Activated CD4-positive, alpha-beta memory T cell treated with anti-CD3 and anti-CD28 coated beads, Interleukin-2, amount 10 ng/mL, durations not matched to agents 7 days and 5 days (primary cell): ENCODE measurements at regions of chr2 and their contacts with region 1.

Region 1: GRCh38 chr2:143110758-143111428 is 18.3 kb upstream of the ARHGAP15 start:
- DNase-seq: peak; percentile 73
- H3K4me3 Mint-ChIP-seq: peak overlapping the region; percentile 8
- H3K27ac Mint-ChIP-seq: peak overlapping the region; percentile 77
- H3K4me1 Mint-ChIP-seq: peaks cover 27% of the 10 kb centered on the region
- H3K27me3 Mint-ChIP-seq: peaks cover 4% of the 10 kb centered on the region

Region 2: GRCh38 chr2:143034292-143035074 is 76.4 kb before region 1 on chr2:
- CTCF ChIA-PET with region 1: interaction called, 12 read pairs
- POLR2A ChIA-PET with region 1: no interaction called
- DNase-seq: peak; percentile 63
- H3K4me3 Mint-ChIP-seq: no peak overlapping the region
- H3K27ac Mint-ChIP-seq: no peak overlapping the region
- H3K4me1 Mint-ChIP-seq: peaks cover 8% of the 10 kb centered on the region
- H3K27me3 Mint-ChIP-seq: peaks cover 4% of the 10 kb centered on the region

Region 3: DNA sequence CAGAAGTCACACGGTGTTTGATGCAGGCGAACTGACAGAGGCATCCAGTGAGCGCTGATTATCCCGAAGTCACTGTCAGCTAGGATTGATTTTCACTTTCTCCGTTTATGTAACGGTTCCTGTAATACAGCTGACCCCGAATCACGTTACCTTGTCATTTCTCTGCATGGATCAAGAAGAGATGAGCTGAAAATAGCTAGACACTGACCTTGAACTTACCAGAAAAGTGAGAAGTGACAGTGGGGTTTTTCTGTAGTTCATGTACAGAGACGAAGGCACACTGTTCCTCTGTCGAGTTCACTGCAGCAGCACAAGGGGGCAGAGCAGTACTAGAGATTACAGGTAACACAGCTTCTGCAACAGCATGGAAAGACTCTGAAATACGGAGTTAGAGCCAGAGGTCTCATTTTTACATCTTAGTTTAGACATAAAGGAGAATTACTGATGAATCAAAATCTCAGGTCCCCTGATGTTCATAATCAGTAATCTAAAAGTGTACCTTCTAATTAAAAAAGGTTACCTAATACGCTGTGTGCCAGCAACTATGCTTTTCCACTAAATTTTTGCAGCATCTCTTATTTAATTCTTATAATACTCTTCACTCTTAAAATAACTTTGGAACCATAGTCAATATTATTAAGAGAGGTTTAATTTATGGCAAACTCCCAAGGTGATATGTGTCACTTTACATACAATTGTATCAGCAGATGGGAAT is 51.4 kb after region 1 on chr2:
- CTCF ChIA-PET with region 1: interaction called, 18 read pairs
- POLR2A ChIA-PET with region 1: no interaction called
- DNase-seq: peak; percentile 48
- H3K4me3 Mint-ChIP-seq: no peak overlapping the region
- H3K27ac Mint-ChIP-seq: no peak overlapping the region
- H3K4me1 Mint-ChIP-seq: peaks cover 51% of the 10 kb centered on the region
- H3K27me3 Mint-ChIP-seq: no peaks in the 10 kb centered on the region

Region 4: DNA sequence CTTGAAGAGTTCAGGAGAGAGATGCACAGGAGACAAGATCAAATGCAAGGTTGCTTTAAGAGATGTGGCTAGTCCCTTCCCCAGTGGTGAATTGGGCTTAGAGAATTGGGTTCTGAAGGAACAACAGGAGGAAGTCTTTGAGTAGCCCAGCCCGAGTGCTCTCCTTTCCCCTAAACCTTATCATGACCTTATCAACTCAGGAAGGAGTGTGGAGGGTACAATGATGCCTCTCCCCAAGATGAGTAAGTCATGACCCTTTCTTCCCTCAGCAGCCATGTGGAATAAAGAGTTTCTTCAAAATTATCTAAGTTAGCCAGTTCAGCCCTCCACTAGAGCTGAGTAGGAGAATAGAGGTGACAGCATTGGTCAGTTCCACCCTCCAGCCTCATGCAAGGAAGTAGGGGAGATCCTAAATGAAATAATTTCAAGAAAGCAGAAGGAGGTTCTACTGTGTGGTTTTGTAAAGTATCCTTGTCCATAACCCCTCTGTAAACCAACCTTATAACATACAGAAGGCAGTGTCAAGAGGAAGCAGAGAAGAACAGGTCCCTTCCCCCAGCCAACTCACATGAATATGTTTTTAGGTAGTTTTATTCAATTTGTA is 106.7 kb after region 1 on chr2:
- CTCF ChIA-PET with region 1: interaction called, 32 read pairs
- POLR2A ChIA-PET with region 1: interaction called, 5 read pairs
- DNase-seq: no peak
- H3K4me3 Mint-ChIP-seq: no peak overlapping the region
- H3K27ac Mint-ChIP-seq: peak overlapping the region; percentile 43
- H3K4me1 Mint-ChIP-seq: peaks cover 31% of the 10 kb centered on the region
- H3K27me3 Mint-ChIP-seq: no peaks in the 10 kb centered on the region

Region 5: DNA sequence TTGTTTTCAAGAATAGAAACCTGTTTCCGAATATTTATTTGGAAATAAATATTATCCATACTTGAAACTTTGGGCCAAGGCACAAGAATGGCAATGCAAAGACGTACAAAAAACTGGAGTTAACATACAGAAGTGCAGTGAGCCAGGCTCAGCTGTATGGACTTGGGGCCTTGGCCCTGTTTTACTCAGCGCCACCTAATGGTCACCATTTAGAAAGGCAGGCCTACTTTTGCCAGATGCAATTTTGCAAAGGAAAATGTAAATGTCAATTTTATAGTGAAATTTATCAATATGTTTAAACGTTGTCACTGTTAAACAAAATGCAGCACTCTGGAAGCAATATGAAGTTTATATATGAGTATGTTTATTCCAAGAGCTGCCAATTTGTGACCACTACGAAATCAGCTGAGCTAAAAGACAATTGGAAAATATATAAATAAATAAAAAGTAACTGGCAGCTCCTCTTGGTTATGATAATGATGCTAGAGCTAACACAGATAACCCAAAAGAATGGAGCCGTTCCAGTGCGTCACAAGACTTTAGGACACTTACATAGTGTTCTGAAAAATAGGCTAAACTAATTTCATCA is 173.3 kb after region 1 on chr2:
- CTCF ChIA-PET with region 1: interaction called, 25 read pairs
- POLR2A ChIA-PET with region 1: no interaction called
- DNase-seq: no peak
- H3K4me3 Mint-ChIP-seq: no peak overlapping the region
- H3K27ac Mint-ChIP-seq: peak overlapping the region; percentile 22
- H3K4me1 Mint-ChIP-seq: peaks cover 13% of the 10 kb centered on the region
- H3K27me3 Mint-ChIP-seq: no peaks in the 10 kb centered on the region